H1 (cell line): ENCODE measurements at regions of chr7 and their contacts with region 1.

Region 1: GRCh38 chr7:133742709-133743538 is 384.2 kb upstream of the LRGUK start:
- DNase-seq: no peak
- H3K4me3 ChIP-seq: no peak overlapping the region
- H3K27ac ChIP-seq: no peak overlapping the region
- H3K4me1 ChIP-seq: peaks cover 0 to 3% (median 0%) of the 10 kb centered on the region in 4 experiments; a peak in 2 of 7 replicates
- H3K27me3 ChIP-seq: no peaks in the 10 kb centered on the region
- CTCF ChIP-seq: peak in 2 of 3 experiments; percentile 41 to 53; a peak in 3 of 4 replicates
- EP300 ChIP-seq: no peak
- POLR2A ChIP-seq: no peak
- RAD21 ChIP-seq: peak; percentile 60 to 62; a peak in 3 of 4 replicates

Region 2: GRCh38 chr7:133676805-133677370 is 66.0 kb before region 1 on chr7:
- CTCF ChIA-PET with region 1: interaction called, 12 read pairs
- POLR2A ChIA-PET with region 1: no interaction called
- DNase-seq: no peak
- H3K4me3 ChIP-seq: no peak overlapping the region
- H3K27ac ChIP-seq: no peak overlapping the region
- H3K4me1 ChIP-seq: peaks cover 0 to 8% (median 0%) of the 10 kb centered on the region in 4 experiments; a peak in 1 of 7 replicates
- H3K27me3 ChIP-seq: no peaks in the 10 kb centered on the region
- CTCF ChIP-seq: no peak
- EP300 ChIP-seq: no peak
- POLR2A ChIP-seq: no peak
- RAD21 ChIP-seq: no peak

Region 3: DNA sequence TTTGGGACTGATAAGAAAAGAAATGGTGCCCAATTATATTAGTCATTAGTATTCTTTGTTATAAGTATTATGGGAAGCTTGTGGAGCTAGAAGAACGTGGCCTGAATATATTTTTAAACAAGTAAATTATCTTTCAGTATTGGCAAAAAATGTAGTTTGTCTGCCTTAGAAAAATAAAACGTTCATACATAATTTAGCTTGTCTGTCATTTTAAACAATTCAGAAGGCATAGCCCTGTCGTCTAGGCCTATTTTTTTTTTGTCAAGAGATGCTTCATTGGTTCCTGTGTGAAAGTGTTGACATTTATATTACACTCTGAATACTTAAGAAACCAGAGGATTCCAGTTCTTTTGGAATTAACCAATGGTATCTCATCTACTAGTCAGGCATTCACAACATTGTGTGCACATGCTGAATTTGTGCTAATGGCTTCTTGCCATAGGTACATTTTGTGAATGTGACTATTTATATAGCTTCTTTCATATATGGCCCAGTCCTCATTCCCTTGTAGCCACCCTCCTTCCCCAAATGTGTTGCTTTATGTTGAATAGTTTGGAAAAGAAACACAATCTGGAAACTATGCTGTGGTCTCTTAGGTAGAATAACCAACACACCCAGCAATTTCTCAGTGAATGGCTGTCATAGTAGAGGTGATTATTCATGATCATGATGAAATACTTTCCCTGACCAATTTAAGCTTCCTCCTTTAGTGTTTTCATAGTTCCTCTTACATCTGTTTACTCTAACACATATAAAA is 54.3 kb before region 1 on chr7:
- CTCF ChIA-PET with region 1: no interaction called
- POLR2A ChIA-PET with region 1: no interaction called
- DNase-seq: no peak
- H3K4me3 ChIP-seq: no peak overlapping the region
- H3K27ac ChIP-seq: no peak overlapping the region
- H3K4me1 ChIP-seq: peaks cover 0 to 2% (median 1%) of the 10 kb centered on the region in 4 experiments; a peak in 2 of 7 replicates
- H3K27me3 ChIP-seq: no peaks in the 10 kb centered on the region
- CTCF ChIP-seq: no peak
- EP300 ChIP-seq: no peak
- POLR2A ChIP-seq: no peak
- RAD21 ChIP-seq: no peak

Region 4: DNA sequence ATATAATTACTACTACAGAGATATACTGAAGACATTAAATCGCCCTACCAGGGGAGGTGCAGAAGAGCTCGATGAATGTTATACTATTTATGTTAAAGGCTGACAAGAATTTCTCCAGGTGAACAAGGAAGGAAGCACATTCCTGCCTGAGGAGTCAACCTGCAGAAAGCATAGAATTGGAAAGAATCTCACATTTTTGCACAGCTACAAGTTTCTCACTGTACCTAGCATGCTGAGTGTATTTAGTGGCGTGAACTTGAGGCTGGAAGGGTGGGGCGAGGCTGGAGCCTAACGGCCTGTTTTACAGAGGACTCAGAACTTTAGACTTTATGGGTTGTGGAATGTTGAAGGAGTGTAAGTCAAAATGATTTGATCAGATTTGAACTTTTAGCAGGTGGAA is 10.6 kb after region 1 on chr7:
- CTCF ChIA-PET with region 1: interaction called, 11 read pairs
- POLR2A ChIA-PET with region 1: interaction called, 8 read pairs
- DNase-seq: no peak
- H3K4me3 ChIP-seq: no peak overlapping the region
- H3K27ac ChIP-seq: no peak overlapping the region
- H3K4me1 ChIP-seq: peaks cover 0 to 7% (median 3%) of the 10 kb centered on the region in 4 experiments; a peak in 4 of 7 replicates
- H3K27me3 ChIP-seq: no peaks in the 10 kb centered on the region
- CTCF ChIP-seq: no peak
- EP300 ChIP-seq: no peak
- POLR2A ChIP-seq: no peak
- RAD21 ChIP-seq: no peak

Region 5: GRCh38 chr7:133846203-133846945 is 103.5 kb after region 1 on chr7:
- CTCF ChIA-PET with region 1: no interaction called
- POLR2A ChIA-PET with region 1: no interaction called
- DNase-seq: no peak
- H3K4me3 ChIP-seq: no peak overlapping the region
- H3K27ac ChIP-seq: no peak overlapping the region
- H3K4me1 ChIP-seq: no peaks in the 10 kb centered on the region
- H3K27me3 ChIP-seq: no peaks in the 10 kb centered on the region
- CTCF ChIP-seq: no peak
- EP300 ChIP-seq: no peak
- POLR2A ChIP-seq: no peak
- RAD21 ChIP-seq: no peak